GM12878 (cell line): ENCODE measurements at regions of chr18 and their contacts with region 1.

Region 1: GRCh38 chr18:63979409-63979920 is 9.6 kb downstream of the SERPINB8 start:
- DNase-seq: no peak
- ATAC-seq: peak; percentile 67
- H3K4me3 ChIP-seq: no peak overlapping the region
- H3K27ac ChIP-seq: no peak overlapping the region
- H3K4me1 ChIP-seq: peaks cover 6% of the 10 kb centered on the region
- H3K27me3 ChIP-seq: no peaks in the 10 kb centered on the region
- CTCF ChIP-seq: peak; percentile 85 to 96 (median 89)
- EP300 ChIP-seq: no peak
- POLR2A ChIP-seq: no peak
- RAD21 ChIP-seq: peak; percentile 72

Region 2: DNA sequence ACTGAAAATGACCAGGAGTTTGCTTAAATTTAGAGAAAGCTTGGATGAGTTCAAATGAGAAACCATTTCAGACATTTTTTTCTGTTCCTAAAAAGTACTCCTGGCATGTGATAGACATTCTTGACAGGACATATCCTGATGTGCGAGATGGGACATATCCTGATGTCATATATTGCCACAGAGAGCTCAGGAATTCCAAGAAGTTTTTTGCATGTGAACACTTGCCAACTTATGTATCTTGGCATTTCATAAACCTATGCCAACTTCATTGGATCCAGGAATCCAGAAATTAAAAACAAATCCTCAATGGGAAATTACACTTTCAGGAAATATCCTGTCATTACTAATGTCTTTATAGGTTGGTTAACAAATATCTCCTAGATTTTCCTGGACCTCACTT is 314.9 kb before region 1 on chr18:
- CTCF ChIA-PET with region 1: no interaction called
- POLR2A ChIA-PET with region 1: no interaction called
- RAD21 ChIA-PET with region 1: no interaction called
- SMC1A ChIA-PET with region 1: no interaction called
- in situ Hi-C with region 1: no loop called
- intact Hi-C with region 1: no loop called
- DNase-seq: no peak
- ATAC-seq: no peak
- H3K4me3 ChIP-seq: no peak overlapping the region
- H3K27ac ChIP-seq: no peak overlapping the region
- H3K4me1 ChIP-seq: no peaks in the 10 kb centered on the region
- H3K27me3 ChIP-seq: no peaks in the 10 kb centered on the region
- CTCF ChIP-seq: no peak
- EP300 ChIP-seq: no peak
- POLR2A ChIP-seq: no peak
- RAD21 ChIP-seq: no peak

Region 3: DNA sequence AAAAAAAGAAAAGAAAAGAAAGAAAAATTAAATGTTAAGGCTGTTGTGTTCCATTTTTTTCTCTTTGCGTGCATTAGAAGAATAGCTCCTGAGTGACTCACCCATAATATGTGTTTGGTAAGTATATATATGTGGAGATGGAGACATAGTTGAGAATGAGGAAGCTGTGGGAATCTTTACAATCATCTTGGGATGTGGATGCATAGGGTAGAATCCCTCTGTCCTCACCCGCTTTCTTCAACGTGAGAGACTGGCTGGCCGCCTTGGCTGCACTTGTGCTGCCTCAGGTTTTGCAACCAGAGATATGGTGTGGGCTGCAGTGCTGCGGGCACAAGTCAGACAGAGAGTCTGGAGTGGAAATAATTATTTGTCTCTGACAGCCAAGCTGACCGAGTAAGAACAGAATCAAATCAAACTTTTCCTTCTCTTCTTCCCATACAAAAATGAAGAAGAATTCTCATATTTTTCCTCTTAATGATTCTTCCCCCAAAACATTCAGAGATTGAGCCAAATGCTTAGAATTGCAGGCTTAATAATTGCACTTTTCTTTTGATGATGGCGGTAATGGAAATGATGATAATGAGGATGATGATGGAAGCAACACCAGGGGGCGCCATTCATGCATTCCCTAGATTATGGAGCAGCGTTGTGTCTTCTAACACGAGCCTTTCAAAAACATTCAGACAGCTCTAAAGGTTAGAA is 155.8 kb before region 1 on chr18:
- CTCF ChIA-PET with region 1: interaction called, 7 read pairs
- POLR2A ChIA-PET with region 1: no interaction called
- RAD21 ChIA-PET with region 1: no interaction called
- SMC1A ChIA-PET with region 1: interaction called, 4 read pairs
- in situ Hi-C with region 1: no loop called
- intact Hi-C with region 1: loop called (anchors 2 kb)
- DNase-seq: no peak
- ATAC-seq: peak; percentile 68
- H3K4me3 ChIP-seq: no peak overlapping the region
- H3K27ac ChIP-seq: no peak overlapping the region
- H3K4me1 ChIP-seq: no peaks in the 10 kb centered on the region
- H3K27me3 ChIP-seq: no peaks in the 10 kb centered on the region; a peak in 1 of 4 replicates
- CTCF ChIP-seq: peak; percentile 45 to 50 (median 47); a peak in 5 of 6 replicates
- EP300 ChIP-seq: no peak
- POLR2A ChIP-seq: no peak
- RAD21 ChIP-seq: peak; percentile 50

Region 4: DNA sequence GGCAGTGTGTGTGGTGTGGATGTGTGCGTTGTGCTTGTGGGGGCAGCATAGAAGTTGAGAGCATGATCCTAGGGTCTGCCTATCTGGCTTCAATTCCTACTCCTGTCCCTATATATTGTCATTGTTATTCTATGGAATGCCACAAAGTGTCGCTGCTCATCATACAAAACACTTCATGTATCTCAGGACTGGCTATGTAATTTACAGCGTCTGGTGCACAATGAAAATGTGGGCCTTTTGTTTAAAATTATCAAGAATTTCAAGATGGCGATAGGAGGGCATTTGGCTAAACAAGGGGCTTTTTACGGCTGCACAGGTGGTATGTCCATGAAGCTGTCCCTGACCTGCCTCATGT is 88.5 kb before region 1 on chr18:
- CTCF ChIA-PET with region 1: interaction called, 38 read pairs
- POLR2A ChIA-PET with region 1: no interaction called
- RAD21 ChIA-PET with region 1: interaction called, 3 read pairs
- SMC1A ChIA-PET with region 1: interaction called, 4 read pairs
- in situ Hi-C with region 1: loop called (anchors 5 kb)
- intact Hi-C with region 1: loop called (anchors 1 kb)
- DNase-seq: no peak
- ATAC-seq: peak; percentile 80
- H3K4me3 ChIP-seq: no peak overlapping the region
- H3K27ac ChIP-seq: no peak overlapping the region
- H3K4me1 ChIP-seq: no peaks in the 10 kb centered on the region
- H3K27me3 ChIP-seq: no peaks in the 10 kb centered on the region
- CTCF ChIP-seq: peak; percentile 39 to 74 (median 50); a peak in 4 of 6 replicates
- EP300 ChIP-seq: no peak
- POLR2A ChIP-seq: no peak
- RAD21 ChIP-seq: peak; percentile 95

Region 5: DNA sequence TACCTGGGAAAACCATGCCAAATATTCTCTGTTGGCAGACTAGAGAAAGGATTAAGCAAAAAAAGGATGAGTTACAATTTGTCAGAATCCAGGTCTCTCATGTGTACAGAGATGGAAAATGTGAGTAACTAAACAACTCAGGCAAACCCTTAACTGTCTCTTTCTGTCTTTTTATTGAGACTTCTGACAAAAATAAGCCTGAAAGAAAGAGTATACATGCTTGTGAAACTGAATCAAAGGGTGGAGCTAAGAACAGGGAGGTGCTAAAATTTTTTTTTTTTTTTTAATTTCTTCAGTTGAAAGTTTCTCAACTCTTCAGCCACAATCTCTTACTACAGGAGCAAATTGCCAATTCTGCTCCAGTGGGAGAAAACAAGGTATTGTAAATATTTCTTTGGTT is 71.8 kb before region 1 on chr18 and contains the start of gene SERPINB10:
- CTCF ChIA-PET with region 1: interaction called, 10 read pairs
- POLR2A ChIA-PET with region 1: interaction called, 4 read pairs
- RAD21 ChIA-PET with region 1: no interaction called
- SMC1A ChIA-PET with region 1: interaction called, 17 read pairs
- in situ Hi-C with region 1: no loop called
- intact Hi-C with region 1: no loop called
- DNase-seq: no peak
- ATAC-seq: peak; percentile 57
- H3K4me3 ChIP-seq: 0 out of 2 replicates have a peak within 1 kb of the TSS, but pooled peaks have one; percentile 4
- H3K27ac ChIP-seq: peak within 1 kb of the TSS; percentile 63; the same call in 1 of the 2 replicates
- H3K4me1 ChIP-seq: peaks cover 4% of the 10 kb centered on the region; the same call in 1 of the 2 replicates
- H3K27me3 ChIP-seq: no peaks in the 10 kb centered on the region
- CTCF ChIP-seq: no peak
- EP300 ChIP-seq: no peak
- POLR2A ChIP-seq: no peak
- RAD21 ChIP-seq: no peak
- polyA plus RNA-seq, gene SERPINB10: 20.7 to 23.1 TPM

Region 6: GRCh38 chr18:63949068-63949737 is 30.3 kb before region 1 on chr18 and contains the start of gene HMSD:
- CTCF ChIA-PET with region 1: interaction called, 13 read pairs
- POLR2A ChIA-PET with region 1: no interaction called
- RAD21 ChIA-PET with region 1: interaction called, 3 read pairs
- SMC1A ChIA-PET with region 1: interaction called, 4 read pairs
- in situ Hi-C with region 1: no loop called
- intact Hi-C with region 1: no loop called
- DNase-seq: peak; percentile 57
- ATAC-seq: peak; percentile 93
- H3K4me3 ChIP-seq: peak within 1 kb of the TSS; percentile 89
- H3K27ac ChIP-seq: peak within 1 kb of the TSS; percentile 97
- H3K4me1 ChIP-seq: peaks cover 9% of the 10 kb centered on the region
- H3K27me3 ChIP-seq: no peaks in the 10 kb centered on the region
- CTCF ChIP-seq: peak; percentile 49 to 60 (median 54)
- EP300 ChIP-seq: no peak; a peak in 1 of 4 replicates
- POLR2A ChIP-seq: peak; percentile 76
- RAD21 ChIP-seq: no peak
- polyA plus RNA-seq, gene HMSD: 31.5 to 33.4 TPM

Region 7: GRCh38 chr18:63963615-63964256 is 15.7 kb before region 1 on chr18:
- CTCF ChIA-PET with region 1: interaction called, 54 read pairs
- POLR2A ChIA-PET with region 1: no interaction called
- RAD21 ChIA-PET with region 1: interaction called, 6 read pairs
- SMC1A ChIA-PET with region 1: interaction called, 24 read pairs
- in situ Hi-C with region 1: no loop called
- intact Hi-C with region 1: no loop called
- DNase-seq: no peak
- ATAC-seq: peak; percentile 83
- H3K4me3 ChIP-seq: no peak overlapping the region
- H3K27ac ChIP-seq: no peak overlapping the region
- H3K4me1 ChIP-seq: no peaks in the 10 kb centered on the region
- H3K27me3 ChIP-seq: no peaks in the 10 kb centered on the region
- CTCF ChIP-seq: peak; percentile 71 to 92 (median 86)
- EP300 ChIP-seq: no peak
- POLR2A ChIP-seq: no peak
- RAD21 ChIP-seq: peak; percentile 57

Region 8: GRCh38 chr18:63994783-63995399 is 15.4 kb after region 1 on chr18:
- CTCF ChIA-PET with region 1: interaction called, 11 read pairs
- POLR2A ChIA-PET with region 1: no interaction called
- RAD21 ChIA-PET with region 1: no interaction called
- SMC1A ChIA-PET with region 1: interaction called, 4 read pairs
- in situ Hi-C with region 1: no loop called
- intact Hi-C with region 1: no loop called
- DNase-seq: no peak
- ATAC-seq: peak; percentile 73
- H3K4me3 ChIP-seq: no peak overlapping the region
- H3K27ac ChIP-seq: no peak overlapping the region
- H3K4me1 ChIP-seq: no peaks in the 10 kb centered on the region
- H3K27me3 ChIP-seq: no peaks in the 10 kb centered on the region
- CTCF ChIP-seq: peak; percentile 59 to 93 (median 89)
- EP300 ChIP-seq: no peak
- POLR2A ChIP-seq: no peak
- RAD21 ChIP-seq: peak; percentile 58

Region 9: DNA sequence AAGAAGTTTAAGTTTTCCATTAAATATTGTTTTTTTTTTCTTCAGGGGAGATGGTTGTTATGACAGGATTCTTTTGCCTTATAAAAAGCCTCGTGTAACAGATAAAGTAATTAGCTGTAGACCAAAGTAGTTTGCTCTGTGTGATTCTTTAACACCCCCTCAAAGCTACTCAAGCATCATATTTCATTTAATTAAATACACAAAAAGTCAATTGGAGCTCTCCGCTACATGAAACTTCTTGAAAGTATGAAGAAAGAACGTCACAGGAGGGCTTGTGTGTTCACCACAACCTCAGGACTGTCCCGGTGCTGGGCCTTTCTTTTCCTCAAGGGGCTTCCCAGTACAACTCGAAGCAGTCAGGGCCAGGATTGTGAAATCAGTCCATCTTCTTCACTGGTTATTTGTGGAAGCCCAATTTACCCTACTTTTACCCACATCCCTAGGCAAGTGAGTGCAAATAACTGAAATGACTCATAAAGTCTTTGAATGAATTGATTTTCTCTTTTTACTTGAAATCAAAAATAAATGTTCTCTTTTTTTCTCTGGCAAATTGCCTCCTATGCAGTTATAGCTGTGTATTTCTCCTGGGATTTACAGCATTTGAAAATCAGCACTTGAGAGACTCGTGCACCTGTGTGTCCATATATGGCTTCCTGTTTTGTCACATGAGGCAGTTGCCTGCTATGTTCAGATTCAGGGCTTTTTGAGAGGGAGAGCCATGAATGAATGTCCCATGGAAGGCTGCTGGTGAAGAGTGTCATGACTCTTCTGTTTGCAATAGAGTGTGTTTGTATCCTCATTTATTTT is 120.9 kb after region 1 on chr18:
- CTCF ChIA-PET with region 1: no interaction called
- POLR2A ChIA-PET with region 1: no interaction called
- RAD21 ChIA-PET with region 1: no interaction called
- SMC1A ChIA-PET with region 1: no interaction called
- in situ Hi-C with region 1: no loop called
- intact Hi-C with region 1: no loop called
- DNase-seq: peak; percentile 33
- ATAC-seq: peak; percentile 74
- H3K4me3 ChIP-seq: no peak overlapping the region
- H3K27ac ChIP-seq: no peak overlapping the region
- H3K4me1 ChIP-seq: no peaks in the 10 kb centered on the region; the same call in 1 of the 2 replicates
- H3K27me3 ChIP-seq: no peaks in the 10 kb centered on the region
- CTCF ChIP-seq: no peak
- EP300 ChIP-seq: 0 out of 4 replicates have a peak, but pooled peaks of 1 of the 2 experiments have one; percentile 8
- POLR2A ChIP-seq: no peak
- RAD21 ChIP-seq: no peak